Psoas muscle (tissue), 8 donors: ENCODE measurements at regions of chr18 and their contacts with region 1.

Region 1: DNA sequence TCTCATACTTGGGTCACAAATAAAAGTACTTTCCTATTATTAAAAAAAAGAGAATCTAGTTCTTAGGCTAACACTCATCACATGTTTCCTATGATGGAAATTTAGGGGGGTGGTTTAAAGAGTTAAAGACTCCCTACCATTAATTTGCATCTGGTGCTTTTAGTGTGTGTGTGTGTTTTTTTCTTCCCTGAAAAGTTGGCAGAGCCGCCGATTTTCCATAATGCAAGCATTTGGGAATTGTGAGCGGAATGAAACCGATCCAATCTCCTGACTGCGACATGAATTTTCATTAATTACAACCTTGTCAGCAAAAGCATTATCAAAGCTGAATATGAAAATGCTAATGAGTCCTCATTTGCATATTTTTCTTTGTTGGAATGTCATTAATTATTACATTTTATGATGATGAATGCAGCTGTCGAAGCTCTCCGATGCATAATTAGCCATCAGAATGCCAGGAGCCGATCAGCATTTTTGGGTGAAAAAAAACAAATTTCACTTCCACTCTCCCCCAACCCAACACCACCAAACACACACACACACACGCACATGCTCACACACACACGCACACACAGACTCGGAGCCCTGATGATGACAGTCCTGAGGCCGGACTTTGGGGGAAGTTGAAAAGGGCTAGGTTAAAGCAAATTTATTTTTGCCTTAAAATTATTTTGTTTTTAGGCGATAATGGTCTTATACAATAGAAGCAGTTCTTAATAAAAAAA is 165.4 kb downstream of the TCF4 start:
- DNase-seq: peak; percentile 52 to 66
- ATAC-seq: peak; percentile 62 to 73 (median 65)
- H3K4me3 ChIP-seq: peak overlapping the region; percentile 67
- H3K27ac ChIP-seq: peak overlapping the region; percentile 89
- H3K4me1 ChIP-seq: peaks cover 18% of the 10 kb centered on the region
- H3K27me3 ChIP-seq: no peaks in the 10 kb centered on the region
- CTCF ChIP-seq: no peak

Region 2: GRCh38 chr18:55384551-55385275 is 37.9 kb before region 1 on chr18:
- intact Hi-C with region 1: no loop called
- DNase-seq: no peak
- ATAC-seq: peak in 2 of 4 donors; percentile 36
- H3K4me3 ChIP-seq: no peak overlapping the region
- H3K27ac ChIP-seq: no peak overlapping the region
- H3K4me1 ChIP-seq: peaks cover 29% of the 10 kb centered on the region
- H3K27me3 ChIP-seq: no peaks in the 10 kb centered on the region
- CTCF ChIP-seq: peak; percentile 39

Region 3: GRCh38 chr18:55458456-55459203 is 36.0 kb after region 1 on chr18:
- intact Hi-C with region 1: loop called in 1 of 2 experiments (anchors 2 kb)
- DNase-seq: no peak
- ATAC-seq: no peak
- H3K4me3 ChIP-seq: no peak overlapping the region
- H3K27ac ChIP-seq: peak overlapping the region; percentile 47
- H3K4me1 ChIP-seq: peaks cover 47% of the 10 kb centered on the region
- H3K27me3 ChIP-seq: no peaks in the 10 kb centered on the region
- CTCF ChIP-seq: no peak

Region 4: DNA sequence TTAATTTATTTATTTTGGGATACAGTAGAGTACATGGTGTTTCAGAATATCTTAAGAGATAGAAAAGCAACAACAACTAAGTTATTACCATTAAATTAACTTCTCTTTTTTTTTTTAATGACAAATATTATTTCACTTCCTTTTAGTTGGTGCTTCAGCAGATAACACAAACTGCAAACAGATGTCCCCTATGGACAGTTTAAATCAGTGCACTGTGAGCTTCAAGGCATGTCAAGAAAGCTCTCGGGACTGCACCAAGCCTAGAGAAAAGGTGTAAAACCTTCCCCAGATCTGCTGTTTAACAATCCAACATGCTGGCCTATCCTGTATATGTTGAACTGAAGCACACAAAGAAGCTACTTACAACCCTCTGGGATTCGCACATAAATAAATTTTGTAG is 42.7 kb after region 1 on chr18:
- intact Hi-C with region 1: loop called in 1 of 2 experiments (anchors 5 kb)
- DNase-seq: no peak
- ATAC-seq: no peak
- H3K4me3 ChIP-seq: no peak overlapping the region
- H3K27ac ChIP-seq: no peak overlapping the region
- H3K4me1 ChIP-seq: peaks cover 39% of the 10 kb centered on the region
- H3K27me3 ChIP-seq: no peaks in the 10 kb centered on the region
- CTCF ChIP-seq: no peak

Region 5: DNA sequence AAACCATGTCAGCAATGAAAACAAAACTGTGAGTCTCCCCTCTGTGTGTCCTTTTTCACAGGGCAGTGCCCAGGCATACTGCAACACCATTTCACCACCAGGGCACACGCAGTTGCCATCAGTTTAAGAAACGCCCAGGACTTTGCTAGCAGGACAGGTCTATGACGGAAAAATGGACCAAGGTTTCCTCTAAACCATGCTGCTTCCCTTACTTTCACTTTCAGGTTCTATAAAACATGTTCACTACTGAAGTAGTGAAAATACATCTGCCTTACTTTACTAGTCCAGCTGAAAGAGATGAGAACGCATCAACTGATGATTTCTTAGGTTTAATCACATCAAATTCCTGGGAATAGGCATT is 54.9 kb after region 1 on chr18:
- intact Hi-C with region 1: loop called (anchors 5 kb)
- DNase-seq: peak; percentile 19 to 58
- ATAC-seq: peak; percentile 79 to 91 (median 87)
- H3K4me3 ChIP-seq: peak overlapping the region; percentile 73
- H3K27ac ChIP-seq: peak overlapping the region; percentile 80
- H3K4me1 ChIP-seq: peaks cover 27% of the 10 kb centered on the region
- H3K27me3 ChIP-seq: no peaks in the 10 kb centered on the region
- CTCF ChIP-seq: peak; percentile 32

Region 6: DNA sequence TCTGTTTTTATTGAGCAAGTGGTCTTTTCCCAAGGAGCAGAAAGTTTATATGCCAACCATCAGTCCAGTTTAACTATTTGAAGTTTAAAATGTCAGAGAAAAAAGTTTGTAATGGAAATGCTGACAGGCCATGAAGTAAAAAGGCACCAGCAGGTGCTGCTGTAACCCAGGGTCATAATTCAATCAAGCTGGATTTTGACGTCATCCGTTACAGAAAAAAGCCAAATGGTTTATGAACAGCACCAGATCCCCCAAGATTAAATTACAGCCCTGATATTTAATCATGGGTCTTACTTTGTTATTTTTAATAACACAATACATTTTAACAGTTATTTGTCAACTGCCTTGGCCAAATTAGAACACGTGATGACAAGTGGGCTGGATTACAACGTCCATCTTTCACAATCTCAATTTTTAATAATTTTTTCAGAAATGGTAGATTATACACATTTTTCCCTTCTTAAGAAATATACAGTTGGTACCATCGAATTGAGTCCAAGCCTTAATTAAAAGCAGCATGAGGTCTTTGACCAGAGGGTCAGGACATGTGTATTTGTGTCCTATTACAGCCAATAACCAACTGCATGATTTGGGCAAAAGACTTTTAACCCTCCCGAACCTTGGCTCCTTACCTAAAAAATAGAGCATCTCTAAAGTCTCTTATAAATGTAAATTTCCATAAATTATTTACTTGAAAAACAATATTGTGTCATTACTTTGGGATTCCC is 155.4 kb after region 1 on chr18:
- intact Hi-C with region 1: loop called in 1 of 2 experiments (anchors 2 kb)
- DNase-seq: no peak
- ATAC-seq: peak; percentile 75 to 85 (median 80)
- H3K4me3 ChIP-seq: peak overlapping the region; percentile 57
- H3K27ac ChIP-seq: peak overlapping the region; percentile 78
- H3K4me1 ChIP-seq: peaks cover 66% of the 10 kb centered on the region
- H3K27me3 ChIP-seq: no peaks in the 10 kb centered on the region
- CTCF ChIP-seq: peak; percentile 27